ENCODE measurements at regions of chr3 and their contacts with region 1.

Region 1: GRCh38 chr3:107235928-107236315 is 141.3 kb upstream of the CCDC54 start:
- ATAC-seq: peak; percentile 60 to 79 (median 74)
- H3K4me3 ChIP-seq: peak overlapping the region in 3 of 5 donors; percentile 4 to 11 (median 11)
- H3K27ac ChIP-seq: no peak overlapping the region
- H3K4me1 ChIP-seq: peaks cover 0 to 7% of the 10 kb centered on the region in 2 donors

Region 2: GRCh38 chr3:107740992-107741896 is 505.3 kb after region 1 on chr3:
- in situ Hi-C with region 1: loop called in 1 of 9 experiments (anchors 25 kb)
- ATAC-seq: peak in 6 of 8 experiments; percentile 16 to 78 (median 58)
- H3K4me3 ChIP-seq: no peak overlapping the region
- H3K27ac ChIP-seq: no peak overlapping the region
- H3K4me1 ChIP-seq: peaks cover 3 to 5% of the 10 kb centered on the region in 2 donors